PC-3 (cell line): ENCODE measurements at regions of chr1 and their contacts with region 1.

Region 1: DNA sequence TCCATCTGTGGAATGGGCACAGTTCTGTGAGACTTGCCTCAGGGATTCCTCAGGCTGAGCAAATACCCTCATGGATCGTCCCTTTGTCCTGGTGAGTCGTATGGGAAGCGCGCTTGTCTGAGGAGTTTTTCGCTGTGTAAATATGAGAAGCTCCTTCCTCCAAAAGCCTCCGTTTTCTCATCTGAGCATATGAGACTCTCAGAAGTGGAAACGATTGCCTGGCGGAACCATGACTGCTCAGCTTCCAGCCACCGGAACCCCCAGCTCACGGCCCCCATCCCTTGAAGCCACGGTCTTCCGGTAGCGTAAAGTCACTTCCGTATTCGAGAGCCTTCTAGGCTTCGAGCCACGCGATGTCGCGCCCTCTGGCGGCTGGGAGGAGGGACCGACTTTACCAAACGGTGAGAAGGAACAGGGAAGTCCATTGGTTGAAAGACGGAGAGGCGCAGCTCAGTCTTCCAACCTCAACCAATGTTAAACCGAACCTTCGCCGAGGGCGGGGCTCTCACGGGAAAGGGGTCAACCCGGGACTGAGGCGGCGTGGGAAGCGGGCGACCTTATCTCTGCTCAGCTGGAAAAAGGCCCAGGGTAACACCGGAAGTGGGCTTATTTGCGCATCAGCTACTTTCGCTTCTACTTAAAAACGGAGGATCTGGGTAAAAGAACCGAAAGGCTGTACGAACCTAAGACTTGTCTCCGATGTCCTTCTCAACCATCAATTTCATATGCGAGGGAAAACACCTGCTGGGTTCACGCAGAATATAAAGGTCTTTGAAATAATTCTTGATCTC is 46.2 kb downstream of the AZIN2 start:
- DNase-seq: peak; percentile 99
- ATAC-seq: peak; percentile 96
- H3K4me3 ChIP-seq: peak overlapping the region; percentile 83
- H3K27ac ChIP-seq: peak overlapping the region; percentile 50
- H3K4me1 ChIP-seq: peaks cover 9% of the 10 kb centered on the region
- H3K27me3 ChIP-seq: no peaks in the 10 kb centered on the region
- CTCF ChIP-seq: peak; percentile 97

Region 2: GRCh38 chr1:33099290-33100118 is 27.7 kb before region 1 on chr1:
- CTCF ChIA-PET with region 1: no interaction called
- POLR2A ChIA-PET with region 1: interaction called, 4 read pairs
- intact Hi-C with region 1: loop called (anchors 1 kb)
- DNase-seq: peak; percentile 97
- ATAC-seq: peak; percentile 98
- H3K4me3 ChIP-seq: no peak overlapping the region
- H3K27ac ChIP-seq: peak overlapping the region; percentile 87
- H3K4me1 ChIP-seq: peaks cover 22% of the 10 kb centered on the region
- H3K27me3 ChIP-seq: no peaks in the 10 kb centered on the region
- CTCF ChIP-seq: peak; percentile 53

Region 3: GRCh38 chr1:33181921-33182341 is 54.7 kb after region 1 on chr1 and contains the start of gene TRIM62:
- CTCF ChIA-PET with region 1: interaction called, 11 read pairs
- POLR2A ChIA-PET with region 1: no interaction called
- intact Hi-C with region 1: no loop called
- DNase-seq: peak; percentile 87
- ATAC-seq: peak; percentile 57
- H3K4me3 ChIP-seq: peak within 1 kb of the TSS; percentile 79
- H3K27ac ChIP-seq: no peak within 1 kb of the TSS
- H3K4me1 ChIP-seq: peaks cover 21% of the 10 kb centered on the region
- H3K27me3 ChIP-seq: no peaks in the 10 kb centered on the region
- CTCF ChIP-seq: no peak
- total RNA-seq, gene TRIM62: 3.9 and 9.7 TPM in 2 replicates

Region 4: GRCh38 chr1:33256701-33257399 is 129.7 kb after region 1 on chr1:
- CTCF ChIA-PET with region 1: interaction called, 3 read pairs
- POLR2A ChIA-PET with region 1: no interaction called
- intact Hi-C with region 1: loop called (anchors 5 kb)
- DNase-seq: peak; percentile 87
- ATAC-seq: peak; percentile 55
- H3K4me3 ChIP-seq: peak overlapping the region; percentile 89
- H3K27ac ChIP-seq: peak overlapping the region; percentile 88
- H3K4me1 ChIP-seq: peaks cover 13% of the 10 kb centered on the region; the same call in 1 of the 2 replicates
- H3K27me3 ChIP-seq: no peaks in the 10 kb centered on the region
- CTCF ChIP-seq: no peak

Region 5: GRCh38 chr1:33349778-33350610 is 222.8 kb after region 1 on chr1:
- CTCF ChIA-PET with region 1: no interaction called
- POLR2A ChIA-PET with region 1: no interaction called
- intact Hi-C with region 1: loop called (anchors 1 kb)
- DNase-seq: peak; percentile 87
- ATAC-seq: peak; percentile 61
- H3K4me3 ChIP-seq: peak overlapping the region; percentile 73
- H3K27ac ChIP-seq: peak overlapping the region; percentile 80
- H3K4me1 ChIP-seq: peaks cover 50% of the 10 kb centered on the region
- H3K27me3 ChIP-seq: no peaks in the 10 kb centered on the region
- CTCF ChIP-seq: no peak